ENCODE measurements at regions of chr1 and their contacts with region 1.

Region 1: GRCh38 chr1:198346178-198346577 is 189.4 kb downstream of the NEK7 start:
- DNase-seq: no peak
- H3K4me3 ChIP-seq: no peak overlapping the region
- CTCF ChIP-seq: no peak

Region 2: DNA sequence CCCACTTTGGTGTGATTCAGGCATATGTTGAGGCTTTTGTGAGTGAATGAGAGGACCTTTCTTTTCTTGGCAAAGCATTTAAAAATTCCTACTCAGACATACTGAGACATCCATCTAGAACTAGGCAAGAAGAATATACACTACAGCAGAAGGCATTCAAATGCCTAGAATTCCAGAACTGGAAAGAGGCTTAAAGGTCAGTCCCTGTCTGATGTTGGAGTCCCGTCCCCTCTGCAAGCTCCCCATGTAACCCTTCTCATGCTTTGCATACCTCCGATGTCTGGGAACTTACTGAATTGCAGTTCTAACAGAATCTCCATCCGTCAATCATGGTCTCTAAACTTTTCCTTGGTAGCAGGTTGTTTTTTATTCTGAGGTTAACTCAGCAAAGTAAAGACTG is 41.4 kb after region 1 on chr1:
- in situ Hi-C with region 1: loop called (anchors 5 kb)
- DNase-seq: no peak
- H3K4me3 ChIP-seq: no peak overlapping the region
- CTCF ChIP-seq: no peak